Calu3 (cell line): ENCODE measurements at regions of chr6 and their contacts with region 1.

Region 1: DNA sequence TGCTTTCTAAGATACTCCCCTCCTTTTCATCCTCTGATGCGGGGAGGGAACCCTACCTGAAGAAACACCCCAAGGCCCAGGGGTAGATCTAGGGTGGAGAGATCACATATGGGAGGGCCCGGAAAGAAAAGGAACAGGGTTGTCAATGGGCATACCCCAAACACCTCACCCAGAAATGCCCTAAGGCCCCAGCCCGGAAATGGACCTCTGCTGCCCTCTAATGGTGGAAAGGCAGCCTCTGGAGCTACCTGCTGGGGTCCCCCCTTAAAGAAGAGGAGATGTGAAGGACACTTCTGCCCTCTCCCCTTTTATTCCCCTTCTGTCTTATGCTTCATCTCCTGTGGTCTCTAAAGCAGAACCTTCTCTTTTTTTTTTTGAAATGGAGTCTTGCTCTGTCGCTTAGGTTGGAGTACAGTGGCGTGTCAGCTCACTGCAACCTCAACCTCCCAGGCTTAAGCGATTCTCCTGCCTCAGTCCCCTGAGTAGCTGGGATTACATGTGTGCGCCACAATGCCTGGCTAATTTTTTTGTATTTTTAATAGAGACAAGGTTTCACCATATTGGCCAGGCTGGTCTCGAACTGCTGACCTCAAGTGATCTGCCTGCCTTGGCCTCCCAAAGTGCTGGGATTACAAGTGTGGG is 458 bp upstream of the ARMC12 start:
- DNase-seq: peak; percentile 85
- H3K4me3 Mint-ChIP-seq: no peak overlapping the region
- H3K27ac Mint-ChIP-seq: no peak overlapping the region
- H3K4me1 Mint-ChIP-seq: peaks cover 7% of the 10 kb centered on the region
- H3K27me3 Mint-ChIP-seq: no peaks in the 10 kb centered on the region
- CTCF ChIP-seq: peak; percentile 90

Region 2: GRCh38 chr6:35522660-35523658 is 213.4 kb before region 1 on chr6:
- CTCF ChIA-PET with region 1: interaction called, 23 read pairs
- intact Hi-C with region 1: loop called (anchors 1 kb)
- DNase-seq: peak; percentile 81
- H3K4me3 Mint-ChIP-seq: peak overlapping the region; percentile 22
- H3K27ac Mint-ChIP-seq: no peak overlapping the region
- H3K4me1 Mint-ChIP-seq: no peaks in the 10 kb centered on the region
- H3K27me3 Mint-ChIP-seq: peaks cover 38% of the 10 kb centered on the region
- CTCF ChIP-seq: peak; percentile 97

Region 3: DNA sequence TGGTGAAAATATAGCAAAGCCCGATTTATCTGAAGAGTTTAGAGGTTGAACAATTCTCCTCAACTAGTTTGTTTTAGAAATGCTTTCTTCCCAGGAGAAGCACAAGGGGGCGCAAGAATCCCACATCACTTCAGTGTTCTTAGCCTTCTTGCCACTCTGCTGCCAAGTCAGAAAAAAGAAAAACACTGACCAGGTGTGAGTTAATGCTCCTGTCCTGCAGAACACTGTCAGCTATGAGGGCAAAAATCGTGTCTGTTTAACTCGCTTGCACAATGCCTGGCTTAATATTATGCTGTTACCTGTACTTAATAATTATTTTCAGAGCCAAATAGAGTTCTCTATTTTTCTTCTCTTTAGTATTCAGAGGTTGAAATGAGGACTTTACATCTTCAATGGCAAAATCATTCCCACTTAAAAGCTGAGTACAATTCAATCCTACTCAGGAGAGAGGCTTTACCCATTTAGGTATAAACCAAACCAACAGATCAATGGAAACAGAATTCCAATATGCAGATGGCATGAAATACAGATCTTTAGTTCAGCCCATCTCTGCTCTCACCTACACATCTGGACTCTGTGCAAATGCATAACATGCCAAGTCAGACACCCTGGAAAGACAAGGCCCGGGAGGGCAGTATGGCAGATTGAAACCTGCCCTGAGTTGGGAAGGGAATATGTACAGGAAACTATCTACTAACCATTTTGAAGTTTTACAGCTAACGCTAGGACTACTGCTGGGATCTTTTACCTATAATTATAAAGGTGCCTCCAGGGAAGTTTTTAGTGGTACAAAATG is 152.3 kb before region 1 on chr6:
- CTCF ChIA-PET with region 1: interaction called, 28 read pairs
- intact Hi-C with region 1: loop called (anchors 1 kb)
- DNase-seq: peak; percentile 75
- H3K4me3 Mint-ChIP-seq: no peak overlapping the region
- H3K27ac Mint-ChIP-seq: no peak overlapping the region
- H3K4me1 Mint-ChIP-seq: no peaks in the 10 kb centered on the region
- H3K27me3 Mint-ChIP-seq: no peaks in the 10 kb centered on the region
- CTCF ChIP-seq: peak; percentile 79

Region 4: DNA sequence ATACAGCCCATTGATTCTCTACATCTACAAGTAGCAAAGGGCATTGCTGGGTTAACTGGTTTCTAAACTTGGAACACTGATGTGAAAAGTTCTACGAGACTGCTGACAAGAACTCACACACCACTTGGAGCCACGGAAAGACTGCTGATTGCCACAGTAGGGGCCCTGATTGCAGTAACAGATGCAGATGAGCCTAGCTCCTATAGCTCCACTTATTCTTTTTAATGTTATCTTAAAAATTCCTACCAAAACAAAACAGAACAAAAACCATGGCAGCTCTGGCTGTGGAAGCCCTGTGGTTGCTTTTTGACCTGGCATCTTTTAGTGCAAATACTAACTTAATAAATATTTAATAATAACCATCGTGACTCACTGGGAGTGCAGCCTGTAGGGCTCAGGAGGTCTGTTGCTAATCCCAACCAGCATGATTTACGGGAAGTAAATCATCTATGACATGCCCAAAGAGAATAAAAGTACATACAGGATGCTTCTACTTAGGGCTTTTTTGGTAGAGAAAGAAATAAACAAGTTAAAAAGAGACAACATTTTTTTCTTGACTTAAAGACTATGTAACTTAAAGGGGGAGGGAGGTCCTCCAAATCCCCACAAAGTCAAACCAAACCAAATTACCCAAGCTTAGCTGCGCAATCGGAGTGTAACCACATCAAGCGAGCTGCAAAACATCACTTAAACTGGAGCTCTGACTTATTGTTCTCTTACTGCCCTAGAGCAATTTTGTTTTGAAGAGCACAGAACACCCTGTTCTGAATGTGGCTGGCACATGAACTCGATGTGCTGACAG is 134.8 kb before region 1 on chr6:
- CTCF ChIA-PET with region 1: interaction called, 7 read pairs
- intact Hi-C with region 1: loop called (anchors 5 kb)
- DNase-seq: peak; percentile 16
- H3K4me3 Mint-ChIP-seq: peak overlapping the region; percentile 10
- H3K27ac Mint-ChIP-seq: no peak overlapping the region
- H3K4me1 Mint-ChIP-seq: peaks cover 39% of the 10 kb centered on the region
- H3K27me3 Mint-ChIP-seq: no peaks in the 10 kb centered on the region
- CTCF ChIP-seq: no peak

Region 5: GRCh38 chr6:35688581-35689322 is 47.6 kb before region 1 on chr6 and contains the start of gene FKBP5:
- CTCF ChIA-PET with region 1: no interaction called
- intact Hi-C with region 1: loop called (anchors 5 kb)
- DNase-seq: peak; percentile 97
- H3K4me3 Mint-ChIP-seq: peak within 1 kb of the TSS; percentile 98
- H3K27ac Mint-ChIP-seq: peak within 1 kb of the TSS; percentile 77
- H3K4me1 Mint-ChIP-seq: peaks cover 7% of the 10 kb centered on the region
- H3K27me3 Mint-ChIP-seq: no peaks in the 10 kb centered on the region
- CTCF ChIP-seq: no peak
- total RNA-seq, gene FKBP5: 14.3 and 15.1 TPM in 2 replicates